ENCODE measurements at regions of chr2 and their contacts with region 1.

Region 1: GRCh38 chr2:29923110-29923721 is 1.8 kb upstream of the ALK start:
- H3K4me3 ChIP-seq: no peak overlapping the region
- H3K27ac ChIP-seq: no peak overlapping the region
- H3K4me1 ChIP-seq: peaks cover 8% of the 10 kb centered on the region
- CTCF ChIP-seq: 0 out of 2 replicates have a peak, but pooled peaks have one; percentile 10

Region 2: DNA sequence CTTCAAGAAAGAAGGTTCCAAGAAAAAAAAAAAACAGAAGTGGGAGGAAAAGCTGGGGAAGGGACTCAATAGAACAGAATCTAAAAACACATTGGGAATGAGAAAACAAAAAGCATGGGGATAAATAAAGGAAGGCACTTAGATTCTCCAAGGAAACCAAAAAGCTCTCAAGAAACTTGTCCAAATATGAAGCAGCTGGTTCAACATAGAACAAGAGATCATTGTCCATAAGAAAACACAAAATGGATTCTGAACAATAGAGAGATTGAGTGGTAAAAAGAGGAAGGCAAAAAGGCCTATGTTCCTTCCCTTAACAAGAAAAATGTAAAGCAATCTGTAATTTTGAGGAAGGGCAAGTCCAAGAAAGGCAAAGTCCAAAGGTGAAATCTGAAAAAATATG is 31.1 kb after region 1 on chr2:
- CTCF ChIA-PET with region 1: interaction called, 11 read pairs
- POLR2A ChIA-PET with region 1: no interaction called
- H3K4me3 ChIP-seq: no peak overlapping the region
- H3K27ac ChIP-seq: no peak overlapping the region
- H3K4me1 ChIP-seq: no peaks in the 10 kb centered on the region
- CTCF ChIP-seq: no peak

Region 3: GRCh38 chr2:30026087-30027055 is 103.2 kb after region 1 on chr2:
- CTCF ChIA-PET with region 1: interaction called, 56 read pairs
- POLR2A ChIA-PET with region 1: no interaction called
- H3K4me3 ChIP-seq: no peak overlapping the region
- H3K27ac ChIP-seq: no peak overlapping the region
- H3K4me1 ChIP-seq: no peaks in the 10 kb centered on the region
- CTCF ChIP-seq: peak; percentile 64

Region 4: GRCh38 chr2:30072250-30072842 is 149.1 kb after region 1 on chr2:
- CTCF ChIA-PET with region 1: interaction called, 27 read pairs
- POLR2A ChIA-PET with region 1: no interaction called
- H3K4me3 ChIP-seq: no peak overlapping the region
- H3K27ac ChIP-seq: no peak overlapping the region
- H3K4me1 ChIP-seq: no peaks in the 10 kb centered on the region
- CTCF ChIP-seq: peak; percentile 65; the same call in 1 of the 2 replicates